Stomach (tissue), 19 donors: ENCODE measurements at regions of chrX and their contacts with region 1.

Region 1: DNA sequence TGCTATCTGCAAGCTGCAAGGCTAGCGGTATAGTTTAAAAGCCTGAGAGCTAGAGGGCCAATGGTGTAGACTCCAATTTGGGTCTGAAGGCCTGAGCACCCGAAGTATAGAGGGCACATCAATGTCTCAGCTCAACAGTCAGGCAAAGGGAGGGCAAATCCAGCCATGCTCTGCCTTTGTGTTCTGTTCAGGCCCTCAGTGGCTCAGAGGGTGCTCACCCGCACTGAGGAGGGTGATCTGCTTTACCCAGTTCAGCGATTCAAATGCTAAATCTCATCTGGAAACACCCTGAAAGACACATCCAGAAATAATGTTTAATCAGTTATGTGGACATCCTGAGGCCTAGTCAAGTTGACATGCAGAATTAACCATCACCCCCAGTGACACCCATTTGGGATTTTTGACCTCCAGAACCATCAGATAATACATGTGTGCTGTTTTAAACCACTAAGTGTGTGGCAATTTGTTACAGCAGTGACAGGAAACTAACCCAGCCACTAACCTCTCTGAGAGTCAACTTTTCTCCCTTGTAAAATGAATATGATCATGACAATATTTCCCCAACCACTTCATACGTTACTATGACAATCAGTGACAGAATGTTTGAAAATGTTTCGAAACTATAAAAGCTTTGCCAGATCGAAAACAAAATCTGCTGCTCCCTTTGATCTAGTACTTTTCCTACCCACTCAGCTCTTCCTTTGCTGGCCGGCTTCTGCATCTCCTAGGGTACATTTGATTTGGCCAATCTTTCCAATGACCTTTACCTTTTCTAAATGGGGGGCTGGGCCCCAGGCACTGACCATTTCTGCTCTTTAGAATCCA is 8.4 kb upstream of the TBL1X start:
- DNase-seq: peak in 1 of 2 donors; percentile 28
- H3K4me3 ChIP-seq: no peak overlapping the region
- H3K27ac ChIP-seq: no peak overlapping the region
- H3K4me1 ChIP-seq: peaks cover 0 to 6% (median 0%) of the 10 kb centered on the region in 4 donors
- H3K27me3 ChIP-seq: no peaks in the 10 kb centered on the region
- CTCF ChIP-seq: no peak
- EP300 ChIP-seq: no peak
- POLR2A ChIP-seq: no peak

Region 2: DNA sequence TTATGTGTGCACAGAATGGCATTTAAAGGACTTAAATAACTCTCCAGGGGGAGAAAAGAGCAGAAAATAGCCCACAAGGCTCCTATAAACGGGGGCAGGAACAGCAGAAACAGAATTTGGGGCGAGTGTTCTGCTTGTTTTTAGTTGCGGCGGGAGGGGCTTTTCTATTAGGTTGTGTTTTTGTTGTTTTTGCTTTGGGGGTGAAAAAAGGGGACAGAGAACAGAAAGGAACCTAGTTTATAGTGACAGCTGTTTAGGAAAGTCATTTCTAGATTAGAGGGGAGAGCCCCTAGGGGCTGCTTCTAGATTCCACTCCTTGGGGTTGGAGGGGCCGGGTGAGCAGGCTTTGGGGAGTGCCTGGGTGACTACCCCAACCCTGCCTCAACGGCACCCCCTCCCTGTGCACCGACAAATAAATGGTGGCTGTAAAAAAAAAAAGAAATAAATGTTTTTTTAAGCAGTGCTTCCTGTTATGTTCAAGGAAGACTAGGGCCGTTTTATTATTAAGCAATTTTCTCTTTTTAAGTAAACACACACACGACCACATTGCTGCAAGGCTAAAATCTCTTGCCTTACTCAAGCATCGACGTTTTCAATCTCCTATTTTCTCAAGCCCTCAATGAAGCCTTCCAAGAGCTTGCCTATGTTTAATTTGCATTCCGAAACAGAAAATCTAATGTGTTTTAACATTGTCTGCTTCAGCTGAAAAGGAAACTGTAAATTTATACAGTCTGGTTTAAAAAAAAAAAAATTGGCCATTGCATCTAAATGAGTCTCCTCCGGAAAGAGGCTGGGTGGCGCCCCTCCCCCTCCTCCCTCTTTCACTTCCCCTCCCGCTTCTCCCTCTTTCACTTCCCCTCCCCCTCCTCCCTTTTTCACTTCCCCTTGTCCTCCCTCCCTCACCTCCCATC is 114.9 kb before region 1 on chrX:
- intact Hi-C with region 1: loop called (anchors 10 kb)
- DNase-seq: peak; percentile 68 to 85
- H3K4me3 ChIP-seq: peak overlapping the region; percentile 7 to 17 (median 13)
- H3K27ac ChIP-seq: peak overlapping the region; percentile 68 to 86 (median 81)
- H3K4me1 ChIP-seq: peaks cover 0 to 48% (median 25%) of the 10 kb centered on the region in 4 donors
- H3K27me3 ChIP-seq: no peaks in the 10 kb centered on the region
- CTCF ChIP-seq: no peak
- EP300 ChIP-seq: no peak
- POLR2A ChIP-seq: no peak

Region 3: GRCh38 chrX:9677098-9677739 is 220.8 kb after region 1 on chrX:
- intact Hi-C with region 1: no loop called
- DNase-seq: peak; percentile 37 to 43
- H3K4me3 ChIP-seq: no peak overlapping the region
- H3K27ac ChIP-seq: peak overlapping the region in 2 of 5 donors; percentile 22 to 38
- H3K4me1 ChIP-seq: no peaks in the 10 kb centered on the region
- H3K27me3 ChIP-seq: no peaks in the 10 kb centered on the region
- CTCF ChIP-seq: no peak
- EP300 ChIP-seq: no peak
- POLR2A ChIP-seq: no peak